A673 (cell line): ENCODE measurements at regions of chr14 and their contacts with region 1.

Region 1: DNA sequence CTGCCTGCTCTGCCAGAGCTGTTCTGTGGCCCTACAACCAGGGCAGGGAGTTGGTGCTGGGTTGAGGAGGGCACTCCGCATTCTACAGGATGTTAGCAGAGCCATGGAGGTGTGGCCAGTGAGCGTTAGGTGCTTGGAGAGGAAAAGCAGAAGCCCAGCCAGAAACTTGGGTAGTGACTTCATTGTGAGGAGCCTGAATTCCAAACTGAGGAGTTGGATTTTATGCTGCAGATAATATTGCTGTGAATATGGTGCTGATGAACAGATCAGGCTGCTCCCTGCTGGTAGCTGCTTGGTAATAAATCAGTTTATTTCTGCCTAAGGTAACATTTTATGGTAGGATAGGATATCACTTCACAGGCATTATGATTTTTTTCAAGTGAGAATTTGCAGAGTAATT is 7.1 kb upstream of the CCDC175 start:
- DNase-seq: peak; percentile 69
- H3K4me3 ChIP-seq: no peak overlapping the region
- H3K27ac ChIP-seq: no peak overlapping the region
- H3K4me1 ChIP-seq: peaks cover 39% of the 10 kb centered on the region
- H3K27me3 ChIP-seq: no peaks in the 10 kb centered on the region
- CTCF ChIP-seq: peak; percentile 50; the same call in 1 of the 2 replicates

Region 2: GRCh38 chr14:59333668-59334067 is 250.1 kb before region 1 on chr14:
- CTCF ChIA-PET with region 1: no interaction called
- POLR2A ChIA-PET with region 1: no interaction called
- intact Hi-C with region 1: no loop called
- DNase-seq: peak; percentile 43
- H3K4me3 ChIP-seq: no peak overlapping the region
- H3K27ac ChIP-seq: no peak overlapping the region
- H3K4me1 ChIP-seq: no peaks in the 10 kb centered on the region
- H3K27me3 ChIP-seq: no peaks in the 10 kb centered on the region
- CTCF ChIP-seq: no peak

Region 3: DNA sequence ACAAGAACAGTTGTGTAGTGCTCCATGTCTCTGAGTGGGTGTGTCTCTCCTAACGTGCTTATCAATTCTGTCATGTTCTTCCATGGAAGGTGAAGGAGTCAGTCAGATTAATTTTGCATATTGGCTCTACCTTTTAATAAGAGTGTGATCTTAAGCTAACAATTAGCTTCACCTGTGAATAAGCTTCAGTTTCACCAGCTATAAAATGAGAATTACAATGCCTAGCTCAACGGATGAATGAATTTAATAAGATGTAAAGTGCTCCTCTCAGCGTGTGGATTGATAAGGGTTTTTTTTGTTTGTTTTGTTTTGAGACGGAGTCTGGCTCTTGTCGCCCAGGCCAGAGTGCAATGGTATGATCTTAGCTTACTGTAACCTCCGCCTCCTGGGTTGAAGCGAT is 39.9 kb before region 1 on chr14:
- CTCF ChIA-PET with region 1: no interaction called
- POLR2A ChIA-PET with region 1: no interaction called
- intact Hi-C with region 1: no loop called
- DNase-seq: no peak
- H3K4me3 ChIP-seq: no peak overlapping the region
- H3K27ac ChIP-seq: no peak overlapping the region
- H3K4me1 ChIP-seq: peaks cover 16% of the 10 kb centered on the region
- H3K27me3 ChIP-seq: no peaks in the 10 kb centered on the region
- CTCF ChIP-seq: no peak

Region 4: GRCh38 chr14:59619061-59619460 is 35.3 kb after region 1 on chr14:
- CTCF ChIA-PET with region 1: interaction called, 3 read pairs
- POLR2A ChIA-PET with region 1: interaction called, 5 read pairs
- intact Hi-C with region 1: loop called (anchors 2 kb)
- DNase-seq: peak; percentile 82
- H3K4me3 ChIP-seq: no peak overlapping the region
- H3K27ac ChIP-seq: peak overlapping the region; percentile 47
- H3K4me1 ChIP-seq: peaks cover 10% of the 10 kb centered on the region
- H3K27me3 ChIP-seq: no peaks in the 10 kb centered on the region
- CTCF ChIP-seq: no peak

Region 5: GRCh38 chr14:59688224-59689170 is 104.7 kb after region 1 on chr14:
- CTCF ChIA-PET with region 1: no interaction called
- POLR2A ChIA-PET with region 1: no interaction called
- intact Hi-C with region 1: loop called (anchors 5 kb)
- DNase-seq: peak; percentile 85
- H3K4me3 ChIP-seq: no peak overlapping the region
- H3K27ac ChIP-seq: no peak overlapping the region
- H3K4me1 ChIP-seq: no peaks in the 10 kb centered on the region
- H3K27me3 ChIP-seq: no peaks in the 10 kb centered on the region
- CTCF ChIP-seq: peak; percentile 94

Region 6: GRCh38 chr14:59852350-59852749 is 268.6 kb after region 1 on chr14:
- CTCF ChIA-PET with region 1: no interaction called
- POLR2A ChIA-PET with region 1: no interaction called
- intact Hi-C with region 1: no loop called
- DNase-seq: no peak
- H3K4me3 ChIP-seq: no peak overlapping the region
- H3K27ac ChIP-seq: no peak overlapping the region
- H3K4me1 ChIP-seq: no peaks in the 10 kb centered on the region
- H3K27me3 ChIP-seq: no peaks in the 10 kb centered on the region
- CTCF ChIP-seq: no peak